ENCODE measurements at regions of chr1 and their contacts with region 1.

Region 1: DNA sequence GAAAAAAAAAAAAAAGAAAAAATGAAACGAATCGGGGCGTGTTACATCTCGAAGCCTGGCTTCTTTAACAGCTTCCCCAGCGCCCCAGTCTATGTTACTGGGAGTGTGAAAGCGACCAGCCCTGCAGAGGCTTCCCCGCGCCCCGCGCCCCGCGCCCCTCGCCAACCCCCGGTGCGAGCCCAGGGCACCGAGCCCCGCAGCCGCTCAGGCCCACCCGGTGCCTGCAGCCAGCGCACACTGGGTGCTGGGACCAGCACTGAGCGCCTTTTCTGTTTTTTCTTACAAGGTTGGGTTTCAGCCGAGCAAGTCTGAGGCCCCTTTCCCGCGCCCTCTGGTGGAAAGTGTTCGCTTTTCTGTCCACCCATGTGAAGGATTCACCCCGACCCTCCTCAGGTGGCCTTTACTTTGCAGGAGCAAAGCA is 42.1 kb upstream of the ZNF496 start:
- DNase-seq: peak; percentile 70
- H3K4me3 Mint-ChIP-seq: peak overlapping the region; percentile 3
- H3K27ac Mint-ChIP-seq: no peak overlapping the region
- H3K4me1 Mint-ChIP-seq: peaks cover 5% of the 10 kb centered on the region
- H3K27me3 Mint-ChIP-seq: no peaks in the 10 kb centered on the region
- CTCF ChIP-seq: peak; percentile 44

Region 2: GRCh38 chr1:247352175-247352574 is 21.6 kb before region 1 on chr1:
- CTCF ChIA-PET with region 1: interaction called, 13 read pairs
- POLR2A ChIA-PET with region 1: interaction called, 5 read pairs
- intact Hi-C with region 1: no loop called
- DNase-seq: peak; percentile 55
- H3K4me3 Mint-ChIP-seq: no peak overlapping the region
- H3K27ac Mint-ChIP-seq: no peak overlapping the region
- H3K4me1 Mint-ChIP-seq: peaks cover 12% of the 10 kb centered on the region
- H3K27me3 Mint-ChIP-seq: no peaks in the 10 kb centered on the region
- CTCF ChIP-seq: no peak

Region 3: DNA sequence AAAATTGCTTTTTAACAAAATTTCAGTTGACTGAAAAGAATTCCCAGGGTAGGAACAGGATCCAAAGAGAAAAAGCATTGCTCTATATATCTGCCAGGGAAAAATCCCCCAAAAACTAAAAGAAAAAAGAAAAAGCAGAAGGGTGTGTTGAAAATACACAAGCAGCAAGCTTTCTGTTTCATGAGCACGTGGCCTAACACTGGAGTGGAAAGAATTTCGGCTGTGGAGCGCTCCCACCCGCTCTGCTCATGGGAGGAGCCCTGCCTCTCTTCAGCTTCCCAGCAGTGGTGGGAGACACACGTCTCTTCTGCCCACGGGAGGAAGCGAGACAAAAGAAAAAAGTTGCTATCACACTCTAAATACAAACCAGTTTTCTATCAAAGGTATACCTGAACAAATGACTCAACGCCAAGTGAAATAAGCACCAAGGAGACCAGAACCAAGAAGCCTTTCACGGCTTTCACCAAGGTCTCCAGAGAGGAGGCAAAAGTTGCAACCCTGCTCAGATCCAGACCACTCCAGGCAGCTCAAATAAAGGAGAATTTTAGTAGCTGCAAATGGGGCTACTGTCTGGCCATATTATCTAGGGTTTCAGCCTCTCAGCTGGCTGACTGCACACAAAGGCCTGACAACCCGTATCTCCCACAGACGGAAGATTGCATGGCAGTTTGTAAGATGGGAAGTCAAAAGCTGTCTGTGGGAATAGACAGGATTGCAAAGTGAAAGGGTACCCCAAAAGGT is 12.6 kb before region 1 on chr1:
- CTCF ChIA-PET with region 1: interaction called, 46 read pairs
- POLR2A ChIA-PET with region 1: interaction called, 6 read pairs
- intact Hi-C with region 1: no loop called
- DNase-seq: no peak
- H3K4me3 Mint-ChIP-seq: no peak overlapping the region
- H3K27ac Mint-ChIP-seq: no peak overlapping the region
- H3K4me1 Mint-ChIP-seq: peaks cover 10% of the 10 kb centered on the region
- H3K27me3 Mint-ChIP-seq: no peaks in the 10 kb centered on the region
- CTCF ChIP-seq: no peak

Region 4: DNA sequence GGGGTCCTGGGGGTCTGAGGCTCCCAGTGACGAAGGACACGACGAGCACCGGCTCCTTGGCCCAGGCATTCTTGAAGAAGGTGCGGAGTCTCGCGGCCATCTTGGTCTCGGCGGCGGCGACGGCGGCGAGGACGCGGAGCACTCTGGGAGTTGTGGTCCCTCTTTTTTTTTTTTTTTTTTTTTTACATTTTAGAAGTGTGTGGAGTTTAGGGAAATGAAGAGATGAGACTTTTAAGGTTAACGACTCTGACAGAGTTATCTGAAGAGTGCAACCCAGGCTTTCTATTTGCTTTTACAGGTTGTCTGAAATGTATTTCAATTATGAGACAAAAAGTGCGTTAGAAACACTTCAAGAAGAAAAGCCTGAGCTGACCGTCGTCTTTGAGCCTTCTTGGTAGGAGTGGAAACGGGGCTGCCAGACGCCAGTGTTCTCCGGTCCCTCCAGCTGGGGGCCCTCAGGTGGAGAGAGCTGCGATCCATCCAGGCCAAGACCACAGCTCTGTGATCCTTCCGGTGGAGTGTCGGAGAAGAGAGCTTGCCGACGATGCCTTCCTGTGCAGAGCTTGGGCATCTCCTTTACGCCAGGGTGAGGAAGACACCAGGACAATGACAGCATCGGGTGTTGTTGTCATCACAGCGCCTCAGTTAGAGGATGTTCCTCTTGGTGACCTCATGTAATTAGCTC is 74.5 kb after region 1 on chr1:
- CTCF ChIA-PET with region 1: interaction called, 10 read pairs
- POLR2A ChIA-PET with region 1: no interaction called
- intact Hi-C with region 1: no loop called
- DNase-seq: no peak
- H3K4me3 Mint-ChIP-seq: no peak overlapping the region
- H3K27ac Mint-ChIP-seq: no peak overlapping the region
- H3K4me1 Mint-ChIP-seq: peaks cover 4% of the 10 kb centered on the region
- H3K27me3 Mint-ChIP-seq: peaks cover 4% of the 10 kb centered on the region
- CTCF ChIP-seq: no peak

Region 5: DNA sequence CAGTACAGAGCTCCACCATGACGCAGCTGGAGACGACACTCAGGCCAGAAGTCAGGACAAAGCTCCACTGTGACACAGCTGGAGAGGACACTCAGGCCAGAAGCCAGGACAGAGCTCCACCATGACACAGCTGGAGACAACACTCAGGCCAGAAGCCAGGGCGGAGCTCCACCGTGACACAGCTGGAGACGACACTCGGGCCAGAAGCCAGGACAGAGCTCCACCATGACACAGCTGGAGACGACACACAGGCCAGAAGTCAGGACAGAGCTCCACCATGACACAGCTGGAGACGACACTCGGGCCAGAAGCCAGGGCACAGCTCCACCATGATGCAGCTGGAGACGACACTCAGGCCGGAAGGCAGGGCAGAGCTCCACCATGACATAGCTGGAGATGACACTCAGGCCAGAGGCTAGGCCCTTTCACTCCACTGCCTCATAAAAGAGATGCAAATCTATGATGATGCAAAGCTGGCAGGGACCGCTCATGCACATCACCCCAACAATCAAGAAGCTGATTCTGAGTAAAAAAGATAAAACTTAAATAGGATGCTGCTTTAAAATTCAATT is 97.8 kb after region 1 on chr1:
- CTCF ChIA-PET with region 1: interaction called, 17 read pairs
- POLR2A ChIA-PET with region 1: interaction called, 3 read pairs
- intact Hi-C with region 1: no loop called
- DNase-seq: no peak
- H3K4me3 Mint-ChIP-seq: no peak overlapping the region
- H3K27ac Mint-ChIP-seq: no peak overlapping the region
- H3K4me1 Mint-ChIP-seq: no peaks in the 10 kb centered on the region
- H3K27me3 Mint-ChIP-seq: no peaks in the 10 kb centered on the region
- CTCF ChIP-seq: no peak

Region 6: DNA sequence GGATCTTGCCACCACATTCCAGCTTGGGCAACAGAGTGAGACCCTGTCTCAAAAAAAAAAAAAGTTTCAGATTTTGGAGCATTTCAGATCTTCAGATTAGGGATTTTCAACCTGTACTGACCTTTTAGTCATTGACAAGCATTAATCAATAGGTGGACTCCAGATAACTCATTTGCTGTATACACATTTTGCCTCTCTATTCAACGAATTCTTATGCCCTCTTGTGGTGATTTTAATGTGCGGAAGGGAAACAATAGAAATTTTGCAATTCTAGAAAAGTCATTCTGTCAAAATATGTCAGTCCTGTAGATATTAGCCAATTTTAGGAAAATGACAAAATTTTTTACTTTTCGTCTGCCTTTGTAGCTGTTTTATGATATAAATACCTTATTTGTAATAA is 202.8 kb after region 1 on chr1:
- CTCF ChIA-PET with region 1: interaction called, 24 read pairs
- POLR2A ChIA-PET with region 1: no interaction called
- intact Hi-C with region 1: loop called (anchors 1 kb)
- DNase-seq: peak; percentile 49
- H3K4me3 Mint-ChIP-seq: no peak overlapping the region
- H3K27ac Mint-ChIP-seq: no peak overlapping the region
- H3K4me1 Mint-ChIP-seq: peaks cover 10% of the 10 kb centered on the region
- H3K27me3 Mint-ChIP-seq: no peaks in the 10 kb centered on the region
- CTCF ChIP-seq: peak; percentile 75

Region 7: GRCh38 chr1:247638011-247638410 is 264.3 kb after region 1 on chr1:
- CTCF ChIA-PET with region 1: no interaction called
- POLR2A ChIA-PET with region 1: no interaction called
- intact Hi-C with region 1: no loop called
- DNase-seq: no peak
- H3K4me3 Mint-ChIP-seq: no peak overlapping the region
- H3K27ac Mint-ChIP-seq: no peak overlapping the region
- H3K4me1 Mint-ChIP-seq: no peaks in the 10 kb centered on the region
- H3K27me3 Mint-ChIP-seq: no peaks in the 10 kb centered on the region
- CTCF ChIP-seq: no peak